ENCODE measurements at regions of chr2 and their contacts with region 1.

Region 1: GRCh38 chr2:231612179-231613053 is 19.8 kb downstream of the TEX44 start:
- DNase-seq: peak; percentile 84 to 99 (median 92)

Region 2: GRCh38 chr2:231068525-231069222 is 543.7 kb before region 1 on chr2:
- intact Hi-C with region 1: no loop called
- DNase-seq: no peak

Region 3: DNA sequence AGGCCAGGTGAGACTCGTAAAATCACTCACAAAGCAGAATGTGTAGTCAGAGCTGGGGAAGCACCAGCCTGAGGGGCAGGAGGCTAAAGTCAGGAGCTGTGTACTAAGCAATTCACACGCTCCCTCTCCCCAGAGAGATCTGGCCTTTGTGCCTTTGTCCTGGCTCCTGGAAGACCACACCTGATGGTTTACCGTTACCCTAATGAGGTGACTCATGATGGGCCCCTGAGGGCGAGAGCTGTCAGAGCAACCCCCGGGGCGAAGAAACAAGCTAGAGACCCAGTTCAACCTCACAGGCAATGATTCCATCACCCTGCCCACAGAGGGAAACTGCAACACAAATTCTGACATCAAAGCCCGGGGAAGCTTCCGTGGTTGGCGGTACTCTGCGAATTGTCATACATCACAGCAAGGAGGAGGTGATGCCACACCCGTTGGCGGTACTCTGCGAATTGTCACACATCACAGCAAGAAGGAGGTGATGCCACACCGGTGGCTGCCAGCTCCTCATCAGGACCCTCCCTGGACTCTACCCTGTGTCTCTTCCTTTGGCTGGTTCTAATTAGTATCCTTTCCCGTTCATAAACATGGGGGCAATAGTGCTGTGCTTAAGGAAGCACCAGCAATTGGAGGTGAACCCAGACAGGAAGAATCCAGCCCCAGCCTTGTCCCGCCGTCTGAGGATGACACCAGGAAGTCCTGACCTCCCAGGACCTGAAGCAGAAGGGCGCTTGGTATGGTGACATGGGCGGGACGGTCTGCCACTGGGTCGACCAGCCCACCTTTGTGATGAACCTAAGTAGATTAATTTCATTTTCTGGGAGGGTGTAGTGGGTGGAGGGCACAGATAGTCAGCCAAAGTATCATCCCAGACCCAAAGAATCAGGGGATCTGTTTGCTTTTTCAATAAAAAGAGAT is 186.3 kb before region 1 on chr2:
- intact Hi-C with region 1: no loop called
- DNase-seq: peak in 1 of 10 donors; percentile 44

Region 4: GRCh38 chr2:231662028-231662810 is 49.8 kb after region 1 on chr2:
- intact Hi-C with region 1: loop called (anchors 1 kb)
- DNase-seq: peak; percentile 90 to 99 (median 94)

Region 5: GRCh38 chr2:231674587-231675338 is 62.3 kb after region 1 on chr2:
- intact Hi-C with region 1: loop called (anchors 1 kb)
- DNase-seq: peak in 8 of 10 donors; percentile 49 to 95 (median 76)

Region 6: DNA sequence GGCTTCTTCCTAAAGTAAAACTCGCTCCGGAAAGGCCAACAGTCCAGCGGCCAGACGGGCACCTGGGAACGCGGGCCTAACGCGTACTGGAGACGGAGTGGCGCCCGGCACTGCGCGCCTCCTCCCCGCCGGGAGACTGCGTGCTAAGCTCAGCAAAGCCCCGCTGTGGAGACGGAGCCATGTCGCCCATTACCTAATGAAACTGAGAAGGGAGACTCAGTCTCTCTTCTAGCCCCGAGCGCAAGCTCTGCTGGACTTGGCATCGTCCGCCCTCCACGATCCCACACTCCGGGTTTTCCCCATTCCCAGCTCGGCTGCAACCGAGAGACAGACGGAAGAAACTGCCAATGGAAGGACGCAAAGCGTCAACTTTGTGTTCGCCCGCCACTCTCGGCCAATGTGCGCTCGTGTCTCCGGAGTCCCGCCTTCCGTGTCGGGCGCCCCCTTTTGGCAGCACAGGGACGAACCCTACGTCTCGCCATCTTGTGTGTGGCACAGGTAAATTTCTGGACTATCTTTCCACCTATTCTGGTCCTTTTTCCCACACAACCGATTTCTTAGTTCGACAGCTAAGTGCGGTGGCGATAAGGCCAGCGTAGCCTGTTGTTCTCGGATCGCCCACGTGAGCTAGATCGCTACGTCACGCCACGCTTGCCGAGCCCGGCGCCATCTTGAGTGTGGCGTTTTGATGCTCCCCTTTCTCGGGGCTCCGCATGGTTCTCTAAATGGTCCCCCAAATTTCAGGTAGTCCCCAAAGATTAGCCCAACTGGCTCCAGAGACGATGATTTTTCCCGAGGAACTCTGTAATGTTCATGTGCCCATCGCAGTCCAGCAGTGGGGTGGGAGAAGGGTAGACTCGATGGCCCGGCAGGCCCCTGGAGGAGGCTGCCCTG is 94.6 kb after region 1 on chr2:
- intact Hi-C with region 1: loop called (anchors 1 kb)
- DNase-seq: peak; percentile 98 to 100 (median 99)

Region 7: GRCh38 chr2:231786177-231786916 is 173.9 kb after region 1 on chr2 and contains the start of gene COPS7B:
- intact Hi-C with region 1: loop called (anchors 2 kb)
- DNase-seq: peak; percentile 72 to 97 (median 82)

Region 8: DNA sequence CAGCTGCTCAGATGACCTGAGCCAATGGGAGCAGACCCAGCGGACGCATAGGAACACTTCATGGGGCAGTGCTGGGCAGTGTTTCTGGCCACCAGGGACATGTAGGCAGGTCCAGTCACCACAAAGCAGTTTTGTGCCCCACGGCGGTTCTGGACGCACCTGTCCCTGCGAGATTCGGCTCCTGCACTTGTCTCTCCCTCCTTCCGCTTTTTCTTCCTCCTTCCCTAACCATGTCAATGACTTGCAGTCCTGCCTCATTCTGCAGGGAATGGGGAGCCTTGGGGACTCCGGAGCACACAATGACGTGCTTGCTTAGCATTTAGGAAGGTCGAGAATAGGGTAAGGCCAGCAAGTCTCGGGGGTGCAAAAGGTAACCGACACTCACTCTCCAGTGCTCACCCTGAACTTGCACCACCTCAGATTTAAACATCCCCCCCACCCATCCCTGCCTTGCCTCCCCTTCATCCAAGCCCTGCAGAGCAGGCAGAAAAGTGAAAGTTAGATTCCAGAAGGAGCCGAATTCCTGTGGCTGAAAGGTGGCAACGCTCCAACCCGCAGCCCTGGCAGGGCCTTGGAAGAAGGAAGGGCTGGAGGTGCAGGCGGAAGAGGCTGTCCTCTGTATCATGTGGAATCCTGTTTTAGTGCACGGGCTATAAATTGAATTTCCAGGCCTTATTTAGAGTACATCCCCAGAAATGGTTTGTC is 1598.6 kb after region 1 on chr2:
- intact Hi-C with region 1: no loop called
- DNase-seq: peak in 5 of 10 donors; percentile 18 to 82 (median 40)

Measured in posterior cingulate gyrus (tissue), 11 donors.